ENCODE measurements at regions of chr7 and their contacts with region 1.

Region 1: GRCh38 chr7:7989133-7989984 is 20.8 kb downstream of the GLCCI1 start:
- DNase-seq: peak in 1 of 2 donors; percentile 30
- ATAC-seq: peak; percentile 64 to 77 (median 68)
- H3K4me3 ChIP-seq: peak overlapping the region; percentile 4
- H3K4me3 Mint-ChIP-seq: peak overlapping the region; percentile 84
- H3K27ac ChIP-seq: peak overlapping the region; percentile 61
- H3K27ac Mint-ChIP-seq: peak overlapping the region; percentile 86 to 90
- H3K4me1 ChIP-seq: peaks cover 4% of the 10 kb centered on the region
- H3K4me1 Mint-ChIP-seq: peaks cover 47 to 70% of the 10 kb centered on the region in 2 donors
- H3K27me3 ChIP-seq: no peaks in the 10 kb centered on the region
- H3K27me3 Mint-ChIP-seq: no peaks in the 10 kb centered on the region
- CTCF ChIP-seq: no peak

Region 2: GRCh38 chr7:7944619-7945282 is 44.6 kb before region 1 on chr7:
- intact Hi-C with region 1: loop called (anchors 5 kb)
- DNase-seq: peak; percentile 19 to 77
- ATAC-seq: peak; percentile 79 to 85 (median 82)
- H3K4me3 ChIP-seq: peak overlapping the region; percentile 21
- H3K4me3 Mint-ChIP-seq: peak overlapping the region; percentile 73
- H3K27ac ChIP-seq: peak overlapping the region; percentile 71
- H3K27ac Mint-ChIP-seq: peak overlapping the region; percentile 81 to 86
- H3K4me1 ChIP-seq: peaks cover 26% of the 10 kb centered on the region
- H3K4me1 Mint-ChIP-seq: peaks cover 51 to 53% of the 10 kb centered on the region in 2 donors
- H3K27me3 ChIP-seq: no peaks in the 10 kb centered on the region
- H3K27me3 Mint-ChIP-seq: no peaks in the 10 kb centered on the region
- CTCF ChIP-seq: no peak

Region 3: GRCh38 chr7:8035647-8036518 is 46.5 kb after region 1 on chr7:
- intact Hi-C with region 1: loop called (anchors 5 kb)
- DNase-seq: peak in 1 of 2 donors; percentile 68
- ATAC-seq: peak; percentile 92 to 99 (median 97)
- H3K4me3 ChIP-seq: no peak overlapping the region
- H3K4me3 Mint-ChIP-seq: no peak overlapping the region
- H3K27ac ChIP-seq: peak overlapping the region; percentile 6
- H3K27ac Mint-ChIP-seq: peak overlapping the region; percentile 46 to 82
- H3K4me1 ChIP-seq: peaks cover 15% of the 10 kb centered on the region
- H3K4me1 Mint-ChIP-seq: peaks cover 28 to 34% of the 10 kb centered on the region in 2 donors
- H3K27me3 ChIP-seq: no peaks in the 10 kb centered on the region
- H3K27me3 Mint-ChIP-seq: no peaks in the 10 kb centered on the region
- CTCF ChIP-seq: peak; percentile 79

Region 4: GRCh38 chr7:8455426-8455825 is 466.1 kb after region 1 on chr7:
- intact Hi-C with region 1: no loop called
- DNase-seq: no peak
- ATAC-seq: no peak
- H3K4me3 ChIP-seq: no peak overlapping the region
- H3K4me3 Mint-ChIP-seq: no peak overlapping the region
- H3K27ac ChIP-seq: no peak overlapping the region
- H3K27ac Mint-ChIP-seq: no peak overlapping the region
- H3K4me1 ChIP-seq: no peaks in the 10 kb centered on the region
- H3K4me1 Mint-ChIP-seq: no peaks in the 10 kb centered on the region
- H3K27me3 ChIP-seq: no peaks in the 10 kb centered on the region
- H3K27me3 Mint-ChIP-seq: no peaks in the 10 kb centered on the region
- CTCF ChIP-seq: no peak

Measured in natural killer cell (primary cell).